Gastrocnemius medialis (tissue), 4 donors: ENCODE measurements at regions of chr15 and their contacts with region 1.

Region 1: DNA sequence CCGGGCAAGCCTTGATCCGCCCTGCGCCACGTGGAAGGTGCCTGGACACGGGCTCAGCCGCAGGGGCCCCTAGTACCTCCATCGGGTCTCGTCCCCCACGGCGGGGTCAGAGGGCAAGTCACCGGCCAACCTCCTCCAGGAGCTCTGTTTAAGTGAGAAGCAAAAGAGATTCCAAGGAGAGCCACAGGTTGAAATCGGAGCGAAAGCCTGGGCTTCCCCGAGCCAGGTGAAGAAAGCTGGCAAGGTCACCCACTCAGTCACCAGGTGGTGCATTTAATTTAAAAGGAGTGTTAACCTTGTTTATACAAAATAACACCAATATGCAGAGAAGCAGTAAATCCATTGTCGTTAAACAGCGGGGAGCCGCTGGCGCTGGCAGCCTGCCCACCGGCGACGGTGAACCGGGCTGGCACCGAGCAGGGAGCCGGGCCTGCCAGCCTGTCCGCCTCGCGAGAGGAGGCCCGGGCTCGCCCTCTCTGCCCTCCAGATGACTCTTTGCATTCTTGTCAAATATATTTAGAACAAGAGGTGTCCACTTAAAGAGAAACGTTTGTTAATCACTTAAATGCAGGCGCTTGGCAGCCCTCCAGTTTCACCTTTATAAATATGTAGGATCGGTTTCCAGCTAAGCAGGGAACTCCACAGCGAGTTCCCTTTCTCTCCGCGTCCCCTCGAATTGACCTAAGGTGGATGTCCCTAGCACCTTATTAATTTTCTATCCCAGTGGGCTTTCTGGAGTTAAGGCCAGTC is 277.3 kb upstream of the NR2F2 start:
- DNase-seq: peak; percentile 17 to 75
- ATAC-seq: peak; percentile 74 to 83
- H3K4me3 ChIP-seq: peak overlapping the region; percentile 44 to 56 (median 50)
- H3K27ac ChIP-seq: peak overlapping the region; percentile 75 to 82 (median 79)
- H3K4me1 ChIP-seq: peaks cover 16 to 25% of the 10 kb centered on the region in 2 donors
- H3K27me3 ChIP-seq: no peaks in the 10 kb centered on the region
- CTCF ChIP-seq: no peak
- POLR2A ChIP-seq: no peak

Region 2: GRCh38 chr15:95988351-95988805 is 64.8 kb before region 1 on chr15:
- in situ Hi-C with region 1: no loop called
- intact Hi-C with region 1: loop called (anchors 5 kb)
- DNase-seq: peak in 1 of 2 donors; percentile 26
- ATAC-seq: peak; percentile 81 to 89
- H3K4me3 ChIP-seq: peak overlapping the region in 1 of 4 donors; percentile 20
- H3K27ac ChIP-seq: peak overlapping the region; percentile 53 to 74 (median 60)
- H3K4me1 ChIP-seq: peaks cover 13 to 18% of the 10 kb centered on the region in 2 donors
- H3K27me3 ChIP-seq: no peaks in the 10 kb centered on the region
- CTCF ChIP-seq: no peak
- POLR2A ChIP-seq: no peak

Region 3: GRCh38 chr15:96181873-96182301 is 128.7 kb after region 1 on chr15:
- in situ Hi-C with region 1: no loop called
- intact Hi-C with region 1: loop called (anchors 5 kb)
- DNase-seq: peak; percentile 22 to 58
- ATAC-seq: peak; percentile 91 to 97
- H3K4me3 ChIP-seq: peak overlapping the region in 3 of 4 donors; percentile 12 to 40 (median 39)
- H3K27ac ChIP-seq: peak overlapping the region in 3 of 4 donors; percentile 34 to 73 (median 40)
- H3K4me1 ChIP-seq: peaks cover 0 to 7% of the 10 kb centered on the region in 2 donors
- H3K27me3 ChIP-seq: no peaks in the 10 kb centered on the region
- CTCF ChIP-seq: no peak
- POLR2A ChIP-seq: no peak

Region 4: GRCh38 chr15:96285305-96285704 is 232.1 kb after region 1 on chr15:
- in situ Hi-C with region 1: no loop called
- intact Hi-C with region 1: loop called (anchors 5 kb)
- DNase-seq: peak; percentile 13 to 51
- ATAC-seq: peak; percentile 36 to 47
- H3K4me3 ChIP-seq: peak overlapping the region in 3 of 4 donors; percentile 27 to 32 (median 29)
- H3K27ac ChIP-seq: peak overlapping the region; percentile 68 to 83 (median 81)
- H3K4me1 ChIP-seq: peaks cover 19 to 25% of the 10 kb centered on the region in 2 donors
- H3K27me3 ChIP-seq: no peaks in the 10 kb centered on the region
- CTCF ChIP-seq: no peak
- POLR2A ChIP-seq: no peak

Region 5: DNA sequence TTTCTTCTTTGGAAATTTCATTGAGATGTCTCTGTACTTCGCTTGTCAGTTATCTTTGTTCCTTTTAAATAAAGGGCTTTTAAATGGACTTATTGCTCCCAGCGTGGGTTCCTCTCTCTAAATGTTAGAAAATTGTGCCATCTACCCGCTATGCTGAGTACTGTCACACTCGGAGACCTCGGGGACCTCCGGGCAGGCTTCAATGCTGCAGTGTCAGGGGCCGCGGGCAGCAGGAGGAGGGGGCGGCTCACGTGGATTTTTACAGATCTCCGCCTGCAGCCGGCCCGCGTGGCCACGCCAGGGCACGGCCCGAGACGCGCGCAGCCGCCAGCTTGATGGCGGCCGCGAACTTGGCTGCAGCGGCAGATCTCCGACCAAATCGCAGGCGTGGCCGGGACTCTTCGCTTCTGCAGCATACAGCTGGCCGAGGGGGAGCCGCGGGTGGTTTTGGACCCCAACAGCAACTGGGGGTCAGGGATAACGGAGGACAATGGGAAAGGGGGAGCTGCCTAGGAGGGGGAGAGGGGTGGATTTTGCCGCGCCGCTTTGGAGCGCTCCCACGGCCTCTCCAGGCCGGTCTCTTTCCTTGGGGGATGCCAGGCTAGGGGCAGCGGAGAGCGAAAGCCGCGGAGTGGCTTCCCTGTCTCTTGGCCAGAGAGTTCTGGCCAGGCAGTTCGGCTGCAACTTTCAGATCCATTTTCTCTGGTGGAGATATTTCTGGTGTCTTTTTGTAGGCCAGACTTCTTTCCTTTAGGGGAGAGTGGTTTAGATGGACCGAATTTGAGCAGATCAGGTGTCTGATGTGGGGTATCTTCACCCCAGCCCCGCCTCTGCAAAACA is 292.6 kb after region 1 on chr15:
- in situ Hi-C with region 1: no loop called
- intact Hi-C with region 1: loop called (anchors 5 kb)
- DNase-seq: peak; percentile 67 to 78
- ATAC-seq: peak; percentile 86 to 87
- H3K4me3 ChIP-seq: peak overlapping the region; percentile 62 to 76 (median 67)
- H3K27ac ChIP-seq: peak overlapping the region; percentile 93 to 98 (median 95)
- H3K4me1 ChIP-seq: peaks cover 0 to 19% of the 10 kb centered on the region in 2 donors
- H3K27me3 ChIP-seq: no peaks in the 10 kb centered on the region
- CTCF ChIP-seq: peak; percentile 51 to 80 (median 74)
- POLR2A ChIP-seq: peak; percentile 19 to 40

Region 6: GRCh38 chr15:96428742-96429141 is 375.5 kb after region 1 on chr15:
- in situ Hi-C with region 1: no loop called
- intact Hi-C with region 1: loop called (anchors 10 kb)
- DNase-seq: peak in 1 of 2 donors; percentile 41
- ATAC-seq: peak; percentile 99
- H3K4me3 ChIP-seq: no peak overlapping the region
- H3K27ac ChIP-seq: peak overlapping the region in 1 of 4 donors; percentile 40
- H3K4me1 ChIP-seq: peaks cover 0 to 6% of the 10 kb centered on the region in 2 donors
- H3K27me3 ChIP-seq: peaks cover 0 to 5% (median 5%) of the 10 kb centered on the region in 3 donors
- CTCF ChIP-seq: no peak
- POLR2A ChIP-seq: no peak